ENCODE measurements at regions of chr11 and their contacts with region 1.

Region 1: DNA sequence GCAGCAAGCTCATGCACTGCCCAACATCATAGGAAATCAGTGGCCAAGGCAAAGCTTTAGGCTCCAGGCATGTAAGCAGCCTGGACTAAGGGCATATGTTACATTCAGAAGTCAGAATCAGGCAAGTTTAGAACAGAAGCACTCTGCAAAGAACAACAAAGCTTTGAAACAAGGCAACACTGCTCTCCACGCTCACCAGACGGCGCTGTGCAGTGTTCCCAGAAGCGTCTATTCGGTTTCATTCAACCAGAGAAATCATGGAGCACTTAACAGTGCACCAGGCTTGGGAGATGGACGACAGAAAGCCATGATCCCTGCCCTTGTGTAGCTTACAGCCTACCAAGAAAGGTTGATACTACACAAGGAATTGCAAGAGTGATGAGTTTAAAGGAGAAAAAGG is 555.8 kb downstream of the BUD13 start:
- DNase-seq: no peak
- H3K4me3 ChIP-seq: no peak overlapping the region
- H3K27ac ChIP-seq: no peak overlapping the region
- H3K4me1 ChIP-seq: no peaks in the 10 kb centered on the region; a peak in 1 of 7 replicates
- H3K27me3 ChIP-seq: no peaks in the 10 kb centered on the region
- CTCF ChIP-seq: peak; percentile 44 to 74 (median 71)
- EP300 ChIP-seq: no peak
- POLR2A ChIP-seq: no peak
- RAD21 ChIP-seq: peak; percentile 52 to 59

Region 2: GRCh38 chr11:115990004-115990447 is 227.0 kb before region 1 on chr11:
- CTCF ChIA-PET with region 1: interaction called, 26 read pairs
- POLR2A ChIA-PET with region 1: no interaction called
- DNase-seq: peak in 1 of 2 experiments; percentile 90
- H3K4me3 ChIP-seq: no peak overlapping the region
- H3K27ac ChIP-seq: no peak overlapping the region
- H3K4me1 ChIP-seq: peaks cover 0 to 2% (median 0%) of the 10 kb centered on the region in 4 experiments; a peak in 2 of 7 replicates
- H3K27me3 ChIP-seq: no peaks in the 10 kb centered on the region
- CTCF ChIP-seq: peak; percentile 86 to 97 (median 96)
- EP300 ChIP-seq: no peak
- POLR2A ChIP-seq: no peak
- RAD21 ChIP-seq: peak; percentile 83 to 85

Region 3: DNA sequence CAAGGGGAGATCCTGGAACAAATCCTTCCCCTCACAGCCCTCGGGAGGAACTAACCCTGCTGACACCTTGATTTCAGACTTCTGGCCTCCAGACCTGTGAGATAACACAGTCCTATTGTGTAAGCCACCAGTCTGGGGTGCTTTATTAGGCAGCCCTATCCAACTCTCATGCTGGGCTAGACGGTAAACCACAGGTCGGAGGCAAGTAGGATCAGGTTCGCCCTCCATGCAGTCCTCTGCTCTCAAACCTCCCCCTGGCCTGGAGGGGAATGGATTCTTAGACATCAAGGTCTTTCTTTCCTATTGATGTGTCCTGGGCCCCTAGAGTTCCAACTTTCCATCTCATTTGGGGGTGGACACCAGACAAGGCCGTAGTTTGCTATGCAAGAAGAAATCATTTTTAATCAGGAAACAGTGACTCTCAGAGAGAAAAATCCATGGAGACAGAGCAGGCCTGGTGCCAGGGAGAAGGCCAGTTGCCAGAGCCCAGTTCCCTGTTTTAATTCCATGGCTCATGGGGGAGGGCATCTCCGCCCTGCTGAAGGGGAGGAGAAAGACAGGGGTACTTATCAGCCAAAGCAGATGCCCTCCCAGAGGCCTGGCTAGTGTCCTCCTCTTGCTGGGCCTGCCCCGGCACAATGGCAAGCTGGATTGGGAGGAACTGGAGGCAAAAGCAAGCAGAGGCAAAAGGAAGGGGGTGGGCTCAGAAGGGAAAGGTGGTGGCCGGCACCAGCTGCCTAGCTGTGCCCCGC is 36.4 kb before region 1 on chr11:
- CTCF ChIA-PET with region 1: interaction called, 16 read pairs
- POLR2A ChIA-PET with region 1: no interaction called
- DNase-seq: no peak
- H3K4me3 ChIP-seq: no peak overlapping the region
- H3K27ac ChIP-seq: no peak overlapping the region; the same call in 1 of the 2 replicates
- H3K4me1 ChIP-seq: peaks cover 2 to 16% (median 13%) of the 10 kb centered on the region in 4 experiments
- H3K27me3 ChIP-seq: no peaks in the 10 kb centered on the region
- CTCF ChIP-seq: no peak
- EP300 ChIP-seq: no peak
- POLR2A ChIP-seq: no peak
- RAD21 ChIP-seq: no peak

Region 4: GRCh38 chr11:116199182-116199581 is 17.8 kb before region 1 on chr11:
- CTCF ChIA-PET with region 1: interaction called, 22 read pairs
- POLR2A ChIA-PET with region 1: interaction called, 3 read pairs
- DNase-seq: no peak
- H3K4me3 ChIP-seq: no peak overlapping the region
- H3K27ac ChIP-seq: no peak overlapping the region
- H3K4me1 ChIP-seq: peaks cover 0 to 4% (median 2%) of the 10 kb centered on the region in 4 experiments; a peak in 4 of 7 replicates
- H3K27me3 ChIP-seq: no peaks in the 10 kb centered on the region; a peak in 1 of 7 replicates
- CTCF ChIP-seq: no peak
- EP300 ChIP-seq: no peak
- POLR2A ChIP-seq: no peak
- RAD21 ChIP-seq: no peak

Region 5: DNA sequence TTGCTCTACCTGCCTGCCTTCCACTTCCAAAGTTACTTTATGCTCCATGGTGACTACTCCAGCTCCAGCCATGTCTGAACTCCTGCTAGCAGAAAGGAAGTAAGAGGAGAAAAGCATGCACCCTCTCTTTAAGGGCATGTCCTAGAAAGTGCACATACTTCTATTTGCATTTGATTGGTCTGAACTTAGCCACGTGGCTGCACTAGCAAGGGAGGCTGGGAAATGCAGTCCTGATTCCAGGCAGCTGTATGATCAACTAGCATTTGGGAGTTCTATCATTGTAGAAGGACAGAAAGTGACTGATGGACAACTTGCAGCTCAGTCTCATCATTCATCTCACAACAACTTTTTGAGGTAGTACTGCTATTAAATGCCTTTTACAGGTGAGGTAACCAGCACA is 40.1 kb after region 1 on chr11:
- CTCF ChIA-PET with region 1: interaction called, 15 read pairs
- POLR2A ChIA-PET with region 1: no interaction called
- DNase-seq: no peak
- H3K4me3 ChIP-seq: no peak overlapping the region
- H3K27ac ChIP-seq: no peak overlapping the region
- H3K4me1 ChIP-seq: peaks cover 0 to 6% (median 0%) of the 10 kb centered on the region in 4 experiments; a peak in 3 of 7 replicates
- H3K27me3 ChIP-seq: peaks cover 0 to 2% (median 0%) of the 10 kb centered on the region in 4 experiments; a peak in 1 of 7 replicates
- CTCF ChIP-seq: no peak
- EP300 ChIP-seq: no peak
- POLR2A ChIP-seq: no peak
- RAD21 ChIP-seq: no peak

Measured in H1 (cell line).